CD4-positive, alpha-beta T cell (primary cell): ENCODE measurements at regions of chr7 and their contacts with region 1.

Region 1: GRCh38 chr7:138865843-138866242 is 67.8 kb upstream of the ATP6V0A4 start:
- DNase-seq: peak; percentile 11 to 69 (median 41)
- ATAC-seq: peak; percentile 93
- H3K4me3 ChIP-seq: no peak overlapping the region
- H3K4me3 Mint-ChIP-seq: no peak overlapping the region
- H3K27ac ChIP-seq: no peak overlapping the region
- H3K27ac Mint-ChIP-seq: no peak overlapping the region
- H3K4me1 ChIP-seq: no peaks in the 10 kb centered on the region
- H3K4me1 Mint-ChIP-seq: no peaks in the 10 kb centered on the region
- H3K27me3 ChIP-seq: no peaks in the 10 kb centered on the region
- H3K27me3 Mint-ChIP-seq: peaks cover 4% of the 10 kb centered on the region
- CTCF ChIP-seq: peak; percentile 51

Region 2: DNA sequence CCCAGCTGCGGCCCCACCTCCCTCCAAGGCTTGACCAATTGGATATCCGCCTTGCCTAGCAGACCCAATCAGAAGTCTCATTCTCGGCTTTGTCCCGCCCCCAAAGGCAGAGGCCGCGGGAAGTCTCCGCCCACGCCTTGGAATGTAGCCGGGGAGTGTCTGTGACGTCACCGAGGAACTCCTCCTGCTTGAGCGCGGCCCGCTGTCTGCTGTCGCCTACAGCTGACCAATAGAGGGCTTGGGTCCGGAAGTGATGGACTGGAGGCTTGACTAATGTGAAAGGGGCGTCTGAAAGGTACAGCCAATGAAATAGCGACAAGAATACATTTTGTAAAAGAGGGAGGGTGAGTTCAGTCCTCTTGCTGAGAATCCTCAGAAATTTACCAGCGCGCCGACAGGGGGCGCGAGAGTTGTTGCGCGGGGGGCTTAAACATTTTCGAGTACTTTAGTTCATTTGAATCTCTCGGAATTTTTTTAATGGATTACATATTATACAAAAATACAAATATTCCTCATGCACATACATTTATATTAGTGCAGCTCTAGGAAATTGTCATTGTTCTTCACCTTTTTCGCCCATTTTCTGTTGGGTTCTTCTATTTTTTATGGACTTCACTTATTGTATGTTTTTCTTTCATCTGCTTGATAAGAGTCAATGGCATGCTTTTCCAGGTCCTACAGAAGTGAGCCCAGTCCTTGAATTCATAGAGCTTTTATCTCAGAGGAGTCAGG is 863.6 kb before region 1 on chr7:
- CTCF ChIA-PET with region 1: no interaction called
- POLR2A ChIA-PET with region 1: no interaction called
- intact Hi-C with region 1: loop called in 1 of 2 experiments (anchors 10 kb)
- DNase-seq: peak; percentile 95 to 100 (median 97)
- ATAC-seq: peak; percentile 87
- H3K4me3 ChIP-seq: peak overlapping the region; percentile 92
- H3K4me3 Mint-ChIP-seq: peak overlapping the region; percentile 93
- H3K27ac ChIP-seq: peak overlapping the region; percentile 67 to 75
- H3K27ac Mint-ChIP-seq: peak overlapping the region; percentile 75
- H3K4me1 ChIP-seq: peaks cover 16% of the 10 kb centered on the region
- H3K4me1 Mint-ChIP-seq: peaks cover 36% of the 10 kb centered on the region
- H3K27me3 ChIP-seq: no peaks in the 10 kb centered on the region
- H3K27me3 Mint-ChIP-seq: no peaks in the 10 kb centered on the region
- CTCF ChIP-seq: peak; percentile 99

Region 3: GRCh38 chr7:138161600-138162081 is 704.2 kb before region 1 on chr7:
- CTCF ChIA-PET with region 1: no interaction called
- POLR2A ChIA-PET with region 1: no interaction called
- intact Hi-C with region 1: loop called in 1 of 2 experiments (anchors 2 kb)
- DNase-seq: peak; percentile 51 to 94 (median 64)
- ATAC-seq: peak; percentile 100
- H3K4me3 ChIP-seq: no peak overlapping the region
- H3K4me3 Mint-ChIP-seq: no peak overlapping the region
- H3K27ac ChIP-seq: no peak overlapping the region
- H3K27ac Mint-ChIP-seq: no peak overlapping the region
- H3K4me1 ChIP-seq: no peaks in the 10 kb centered on the region
- H3K4me1 Mint-ChIP-seq: no peaks in the 10 kb centered on the region
- H3K27me3 ChIP-seq: no peaks in the 10 kb centered on the region
- H3K27me3 Mint-ChIP-seq: peaks cover 3% of the 10 kb centered on the region
- CTCF ChIP-seq: peak; percentile 70

Region 4: GRCh38 chr7:138449580-138449979 is 416.3 kb before region 1 on chr7:
- CTCF ChIA-PET with region 1: no interaction called
- POLR2A ChIA-PET with region 1: no interaction called
- intact Hi-C with region 1: loop called in 1 of 2 experiments (anchors 5 kb)
- DNase-seq: peak in 13 of 14 experiments; percentile 15 to 59 (median 35)
- ATAC-seq: no peak
- H3K4me3 ChIP-seq: no peak overlapping the region
- H3K4me3 Mint-ChIP-seq: no peak overlapping the region
- H3K27ac ChIP-seq: no peak overlapping the region
- H3K27ac Mint-ChIP-seq: no peak overlapping the region
- H3K4me1 ChIP-seq: no peaks in the 10 kb centered on the region
- H3K4me1 Mint-ChIP-seq: no peaks in the 10 kb centered on the region
- H3K27me3 ChIP-seq: no peaks in the 10 kb centered on the region
- H3K27me3 Mint-ChIP-seq: no peaks in the 10 kb centered on the region
- CTCF ChIP-seq: peak; percentile 61

Region 5: GRCh38 chr7:139452958-139453672 is 587.3 kb after region 1 on chr7:
- CTCF ChIA-PET with region 1: no interaction called
- POLR2A ChIA-PET with region 1: no interaction called
- intact Hi-C with region 1: no loop called
- DNase-seq: no peak
- ATAC-seq: no peak
- H3K4me3 ChIP-seq: no peak overlapping the region
- H3K4me3 Mint-ChIP-seq: no peak overlapping the region
- H3K27ac ChIP-seq: no peak overlapping the region
- H3K27ac Mint-ChIP-seq: no peak overlapping the region
- H3K4me1 ChIP-seq: no peaks in the 10 kb centered on the region
- H3K4me1 Mint-ChIP-seq: no peaks in the 10 kb centered on the region
- H3K27me3 ChIP-seq: no peaks in the 10 kb centered on the region
- H3K27me3 Mint-ChIP-seq: no peaks in the 10 kb centered on the region
- CTCF ChIP-seq: no peak